ENCODE measurements at regions of chr6 and their contacts with region 1.

Region 1: DNA sequence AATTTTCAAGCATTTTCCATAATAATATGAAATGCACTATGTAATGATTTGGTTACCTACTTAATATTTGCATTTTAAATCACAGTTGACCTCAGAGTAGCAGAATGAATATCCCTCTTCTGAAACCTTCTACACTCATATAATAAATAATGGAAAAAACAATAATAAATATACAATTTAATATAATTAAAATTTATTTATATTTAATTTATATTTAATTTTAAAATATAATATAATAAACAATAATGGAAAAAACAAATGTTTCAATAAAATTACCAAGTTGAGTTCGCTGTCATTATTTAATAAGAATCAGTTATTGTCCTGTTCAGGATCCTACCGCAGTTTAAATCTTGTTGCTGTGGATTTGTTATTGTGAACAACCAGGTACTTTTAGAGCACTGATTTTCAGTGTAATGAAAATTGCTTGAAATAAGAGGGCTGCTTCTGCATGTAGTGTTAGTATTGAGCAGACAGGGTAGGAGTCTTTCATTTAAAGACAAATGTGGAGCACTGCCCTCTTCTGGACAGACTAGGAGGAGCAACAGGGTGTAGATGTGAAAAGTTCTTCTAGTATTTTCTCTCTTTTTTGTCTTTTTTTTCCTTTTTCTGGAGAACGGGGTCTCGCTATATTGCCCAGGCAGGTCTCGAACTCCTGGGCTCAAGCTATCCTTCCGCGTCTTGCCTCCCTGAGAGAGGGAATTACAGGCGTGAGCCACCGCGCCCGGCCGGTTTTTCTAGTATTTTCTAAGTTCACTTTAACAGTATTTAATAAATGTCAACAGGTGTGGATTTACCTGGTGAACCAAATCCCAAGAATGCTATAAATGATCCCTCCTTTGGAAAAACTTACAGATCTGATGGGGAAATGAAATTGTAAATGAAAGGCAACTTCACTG is 13.6 kb downstream of the TRAPPC3L start:
- DNase-seq: peak; percentile 51 to 64
- H3K4me3 ChIP-seq: no peak overlapping the region
- H3K27ac ChIP-seq: no peak overlapping the region
- H3K4me1 ChIP-seq: peaks cover 0 to 7% (median 0%) of the 10 kb centered on the region in 4 donors
- H3K27me3 ChIP-seq: no peaks in the 10 kb centered on the region
- CTCF ChIP-seq: peak; percentile 74 to 82

Region 2: DNA sequence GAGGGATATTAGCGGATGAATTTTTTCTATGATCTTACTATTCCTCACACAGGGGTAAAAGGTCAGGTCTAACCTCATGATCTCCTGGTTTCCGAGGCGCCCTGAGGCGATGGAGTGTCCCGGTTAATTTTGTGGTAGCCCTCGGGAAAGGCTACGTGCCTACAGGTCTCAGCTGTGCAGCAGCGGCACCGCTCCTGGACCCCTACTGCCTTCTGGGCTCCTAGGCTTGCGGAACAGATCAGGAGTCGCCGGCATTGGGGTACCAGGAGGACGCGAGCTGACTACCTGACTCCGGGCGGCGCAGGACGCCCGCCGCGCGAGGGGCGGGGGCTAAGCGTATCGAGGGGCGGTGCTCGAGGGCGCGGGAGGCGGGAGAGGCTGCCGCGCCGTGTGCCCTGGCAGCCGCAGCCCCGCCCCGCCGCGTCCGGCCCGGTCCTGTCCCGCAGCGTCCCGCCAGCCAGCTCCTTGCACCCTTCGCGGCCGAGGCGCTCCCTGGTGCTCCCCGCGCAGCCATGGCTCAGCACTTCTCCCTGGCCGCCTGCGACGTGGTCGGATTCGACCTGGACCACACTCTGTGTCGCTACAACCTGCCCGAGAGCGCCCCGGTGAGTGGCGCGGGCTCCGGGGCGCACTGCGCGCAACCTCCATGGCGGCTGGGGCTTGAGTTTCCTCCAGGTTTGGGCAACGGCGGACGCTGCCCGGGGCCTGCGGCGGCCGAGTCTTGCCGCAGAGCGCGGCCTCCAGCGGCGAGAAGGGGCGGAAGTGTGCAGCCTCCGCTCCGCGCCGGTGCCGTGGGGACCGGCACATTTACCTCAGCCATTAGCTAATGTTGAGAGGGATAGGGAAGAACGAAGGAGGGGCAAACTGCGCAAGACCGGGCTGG is 431.3 kb before region 1 on chr6 and contains the start of gene NT5DC1:
- intact Hi-C with region 1: no loop called
- DNase-seq: peak; percentile 84 to 93
- H3K4me3 ChIP-seq: peak within 1 kb of the TSS; percentile 57 to 86
- H3K27ac ChIP-seq: peak within 1 kb of the TSS; percentile 82 to 98
- H3K4me1 ChIP-seq: peaks cover 0 to 53% (median 39%) of the 10 kb centered on the region in 4 donors
- H3K27me3 ChIP-seq: no peaks in the 10 kb centered on the region
- CTCF ChIP-seq: peak; percentile 16 to 36

Region 3: GRCh38 chr6:116279260-116280063 is 252.5 kb before region 1 on chr6 and contains the start of gene TSPYL1:
- intact Hi-C with region 1: loop called (anchors 10 kb)
- DNase-seq: peak; percentile 97 to 98
- H3K4me3 ChIP-seq: peak within 1 kb of the TSS; percentile 80 to 85
- H3K27ac ChIP-seq: peak within 1 kb of the TSS; percentile 98 to 99
- H3K4me1 ChIP-seq: peaks cover 0 to 49% (median 28%) of the 10 kb centered on the region in 4 donors
- H3K27me3 ChIP-seq: no peaks in the 10 kb centered on the region
- CTCF ChIP-seq: no peak